Heart right ventricle (tissue), 16 donors: ENCODE measurements at regions of chr1 and their contacts with region 1.

Region 1: DNA sequence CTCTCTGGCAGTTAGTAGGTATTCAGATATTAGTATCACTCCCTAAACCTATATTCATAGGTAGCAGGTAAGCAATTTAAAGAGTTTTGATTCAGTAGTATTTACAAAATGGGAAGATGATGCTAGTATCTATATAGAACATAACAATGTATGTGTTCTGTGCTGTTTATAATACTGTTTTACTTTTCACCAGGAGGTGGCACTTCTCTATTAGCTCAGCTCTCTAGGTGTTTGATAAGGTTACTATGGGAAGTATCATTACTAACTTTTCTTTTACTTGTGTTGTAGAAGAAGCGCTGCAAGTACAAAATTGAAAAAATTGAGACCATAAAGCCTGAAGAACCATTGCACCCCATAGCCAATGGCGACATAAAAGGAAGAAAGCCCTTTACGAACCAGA is 49.4 kb upstream of the FASLG start:
- DNase-seq: no peak
- ATAC-seq: peak in 1 of 8 donors; percentile 72
- H3K4me3 ChIP-seq: no peak overlapping the region
- H3K27ac ChIP-seq: no peak overlapping the region
- H3K4me1 ChIP-seq: peaks cover 0 to 6% (median 0%) of the 10 kb centered on the region in 9 donors
- H3K27me3 ChIP-seq: no peaks in the 10 kb centered on the region
- CTCF ChIP-seq: peak in 8 of 9 donors; percentile 13 to 54 (median 44)

Region 2: DNA sequence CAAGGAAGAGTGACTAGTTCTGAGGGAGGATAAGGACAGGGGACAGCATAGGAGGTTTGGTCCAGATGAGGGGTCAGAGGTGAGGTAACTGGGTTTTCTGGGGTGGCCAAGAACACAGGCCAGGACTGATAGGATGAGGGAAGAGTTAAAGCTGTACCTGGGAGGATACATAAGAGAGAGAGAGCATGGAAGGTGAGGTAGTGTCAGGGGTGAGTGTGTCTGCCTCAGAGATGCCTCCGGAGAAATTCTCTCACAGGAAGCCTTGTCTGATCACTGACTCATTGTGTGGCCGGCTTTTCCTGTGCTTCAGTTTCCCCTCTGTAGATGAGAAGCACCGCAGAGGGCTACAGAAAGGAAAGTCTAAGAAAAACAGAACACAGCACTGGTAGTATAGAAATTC is 89.6 kb after region 1 on chr1:
- intact Hi-C with region 1: loop called in 1 of 10 experiments (anchors 5 kb)
- DNase-seq: no peak
- ATAC-seq: peak in 3 of 8 donors; percentile 25 to 59 (median 28)
- H3K4me3 ChIP-seq: no peak overlapping the region
- H3K27ac ChIP-seq: peak overlapping the region in 4 of 10 donors; percentile 25 to 65 (median 55)
- H3K4me1 ChIP-seq: peaks cover 0 to 48% (median 3%) of the 10 kb centered on the region in 9 donors
- H3K27me3 ChIP-seq: no peaks in the 10 kb centered on the region
- CTCF ChIP-seq: no peak

Region 3: DNA sequence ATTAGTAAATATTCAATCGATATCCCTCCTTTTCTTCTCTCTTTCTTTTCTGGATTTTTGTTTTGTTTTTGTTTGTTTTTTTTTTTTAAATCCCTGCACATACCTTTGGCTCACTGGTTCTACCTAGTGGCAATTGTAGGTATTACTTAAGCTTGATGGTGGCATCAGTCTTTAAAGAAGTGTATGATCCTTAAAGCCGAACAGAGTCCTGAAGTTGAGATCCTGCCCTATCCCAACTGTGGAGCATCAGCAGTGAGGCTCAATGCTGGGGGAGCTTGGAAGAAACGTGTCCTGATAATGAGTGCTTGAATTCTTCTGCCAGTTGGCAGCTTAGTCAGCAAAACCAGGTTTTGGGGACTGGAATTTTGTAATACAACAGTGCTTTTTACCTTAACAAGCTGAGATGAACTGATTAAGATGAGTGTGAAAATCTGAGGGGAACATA is 110.2 kb after region 1 on chr1:
- intact Hi-C with region 1: loop called (anchors 2 to 10 kb)
- DNase-seq: no peak
- ATAC-seq: peak in 1 of 8 donors; percentile 55
- H3K4me3 ChIP-seq: no peak overlapping the region
- H3K27ac ChIP-seq: no peak overlapping the region
- H3K4me1 ChIP-seq: peaks cover 0 to 20% (median 0%) of the 10 kb centered on the region in 9 donors
- H3K27me3 ChIP-seq: no peaks in the 10 kb centered on the region
- CTCF ChIP-seq: peak; percentile 34 to 77 (median 69)